Vagina (tissue), 2 donors: ENCODE measurements at regions of chr20 and their contacts with region 1.

Region 1: DNA sequence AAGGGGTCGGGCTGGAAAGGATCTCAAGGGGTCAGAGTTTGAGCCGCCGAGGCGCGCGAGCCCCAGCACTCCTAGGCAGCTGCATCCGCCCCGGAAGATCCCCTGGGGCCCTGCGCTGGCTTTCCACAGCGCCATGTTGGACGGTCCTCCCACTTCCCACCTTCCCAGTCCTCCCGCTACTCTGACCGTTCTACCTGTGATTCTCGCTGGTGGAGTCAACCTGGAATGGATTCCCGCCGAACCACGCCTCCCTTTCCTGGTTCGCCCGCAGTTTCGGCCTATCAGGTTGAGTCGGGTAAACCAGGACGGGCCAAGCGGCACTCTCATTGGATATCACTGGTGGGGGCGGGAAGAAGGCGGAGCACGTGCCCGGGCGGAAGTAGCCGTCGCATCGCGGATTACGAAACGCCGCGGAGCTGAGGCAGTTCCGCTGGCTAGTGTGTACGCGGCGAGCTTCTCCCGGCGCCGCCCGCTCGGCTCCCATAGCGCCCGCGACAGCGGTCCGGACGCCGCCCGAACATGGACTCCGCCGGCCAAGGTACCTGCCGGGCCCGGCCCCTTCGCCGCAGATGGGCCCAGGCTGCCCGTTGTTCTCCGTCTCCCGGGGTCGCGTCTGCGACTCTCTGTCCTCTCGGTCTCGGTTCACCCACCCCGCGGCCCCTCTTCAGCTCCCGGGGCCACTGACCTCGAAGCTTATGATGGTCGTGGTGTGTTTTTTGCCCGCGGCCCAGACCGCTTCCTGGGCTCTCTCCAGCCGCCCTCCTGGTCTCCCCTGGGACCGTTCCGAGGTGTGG is at the start of gene TPD52L2:
- DNase-seq: peak; percentile 99 to 100
- H3K4me3 ChIP-seq: peak within 1 kb of the TSS; percentile 53 to 94
- H3K27ac ChIP-seq: peak within 1 kb of the TSS; percentile 93
- H3K4me1 ChIP-seq: peaks cover 35% of the 10 kb centered on the region
- H3K27me3 ChIP-seq: no peaks in the 10 kb centered on the region
- CTCF ChIP-seq: peak in 1 of 3 experiments; percentile 37
- POLR2A ChIP-seq: peak in 1 of 2 donors; percentile 54
- total RNA-seq, gene TPD52L2: 90.1 TPM

Region 2: DNA sequence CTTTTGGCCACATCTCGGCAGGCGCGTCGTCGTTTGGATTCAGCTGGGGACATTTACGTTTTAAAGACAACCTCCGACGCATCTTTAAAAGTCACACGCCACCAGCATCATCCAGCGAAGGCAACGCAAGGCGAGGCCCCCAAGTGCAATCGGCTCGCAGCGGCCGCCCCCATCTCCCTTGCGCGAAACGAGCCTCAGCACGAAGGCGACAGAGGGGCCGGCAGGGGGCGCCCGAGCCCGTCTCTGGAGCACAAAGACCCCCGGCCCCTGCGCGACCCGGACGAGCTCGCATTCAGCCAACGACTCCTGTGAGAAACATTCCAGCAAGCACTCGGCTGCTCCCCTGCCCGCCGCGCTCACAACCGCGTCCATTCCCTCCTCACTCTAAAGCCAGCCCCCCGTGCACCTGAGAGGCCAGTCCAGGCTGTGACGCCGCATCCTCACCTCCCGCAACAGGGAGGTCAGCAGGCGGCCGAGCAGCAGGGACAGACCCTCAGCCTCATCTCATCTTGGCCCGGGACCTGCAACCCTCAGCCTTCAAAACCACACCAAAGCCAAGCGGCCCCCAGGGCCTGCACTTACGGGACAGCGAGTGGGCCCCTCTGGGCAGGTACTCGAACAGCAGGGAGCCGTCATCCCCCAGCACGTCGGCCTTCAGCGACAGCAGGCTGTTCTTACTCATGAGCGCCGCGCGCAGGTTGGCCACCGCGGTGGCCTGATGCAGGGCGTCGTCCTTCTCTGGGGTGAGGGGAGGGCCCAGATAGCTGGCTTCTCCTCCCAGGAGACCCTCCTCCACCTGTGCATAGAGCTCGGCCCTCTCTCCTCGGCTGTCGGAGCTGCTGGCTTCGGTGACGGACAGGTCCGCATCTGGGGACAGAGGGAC is 89.7 kb before region 1 on chr20:
- intact Hi-C with region 1: loop called (anchors 5 kb)
- DNase-seq: no peak
- H3K4me3 ChIP-seq: peak overlapping the region in 1 of 2 donors; percentile 21
- H3K27ac ChIP-seq: no peak overlapping the region
- H3K4me1 ChIP-seq: peaks cover 20% of the 10 kb centered on the region
- H3K27me3 ChIP-seq: no peaks in the 10 kb centered on the region
- CTCF ChIP-seq: peak; percentile 38 to 56 (median 54)
- POLR2A ChIP-seq: no peak